ENCODE measurements at regions of chr1 and their contacts with region 1.

Region 1: DNA sequence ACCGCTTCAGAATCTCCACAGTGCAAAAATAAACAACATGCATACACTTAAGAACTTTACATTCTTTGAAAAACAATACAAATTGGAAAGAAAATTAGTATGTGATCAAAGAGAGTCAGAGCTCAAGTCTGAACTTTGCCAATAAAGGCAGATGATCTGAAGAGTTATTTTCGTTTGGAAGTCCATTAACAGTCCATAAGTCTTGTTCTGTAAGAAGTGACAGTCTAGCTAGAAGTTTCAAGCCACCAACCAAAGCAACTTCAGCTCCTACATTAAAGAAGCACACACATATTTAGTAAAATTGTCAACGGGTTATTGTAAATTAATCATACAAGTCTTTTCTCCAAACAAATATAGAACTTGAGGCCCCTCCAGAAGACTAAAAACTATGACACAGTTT is 20.7 kb downstream of the ANGEL2 start:
- DNase-seq: no peak
- H3K4me3 ChIP-seq: no peak overlapping the region
- H3K27ac ChIP-seq: no peak overlapping the region
- H3K4me1 ChIP-seq: peaks cover 3% of the 10 kb centered on the region
- H3K27me3 ChIP-seq: no peaks in the 10 kb centered on the region
- CTCF ChIP-seq: no peak

Region 2: DNA sequence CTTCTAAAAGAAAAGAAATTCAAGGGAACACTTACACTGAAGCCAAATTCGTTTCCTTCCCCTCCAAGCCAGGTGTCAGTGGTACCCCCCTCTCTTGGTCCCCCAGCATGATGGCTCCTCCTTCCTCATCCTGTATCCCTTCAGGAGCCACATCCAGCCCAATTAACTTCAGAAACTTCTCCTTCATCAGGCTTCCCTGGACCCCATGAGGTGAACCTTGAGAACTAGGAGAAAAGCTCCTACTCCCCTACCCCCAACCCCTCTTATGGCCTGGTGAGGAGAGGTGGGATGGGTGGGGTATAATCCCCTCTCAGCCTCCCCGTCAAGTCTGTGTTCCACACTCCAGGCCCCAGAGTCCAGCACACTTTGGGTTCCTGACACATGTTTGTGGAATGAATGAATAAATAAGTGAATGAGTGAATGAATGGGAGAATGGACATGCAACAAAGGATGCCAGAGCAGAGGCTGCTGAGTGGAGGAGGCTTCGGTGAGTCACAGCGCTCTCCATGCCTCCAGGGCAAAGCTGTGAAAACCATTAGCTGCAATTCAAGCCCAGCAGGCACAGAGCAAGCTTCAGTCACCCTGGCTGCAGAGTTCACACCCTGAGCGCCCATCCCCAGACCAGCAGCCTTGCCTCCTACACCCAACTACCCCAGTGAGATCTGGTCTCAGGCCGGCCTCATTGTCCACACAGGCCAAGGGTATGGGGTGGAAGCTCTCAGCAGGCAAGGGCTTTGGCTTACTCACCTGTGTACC is 339.1 kb before region 1 on chr1:
- intact Hi-C with region 1: loop called (anchors 5 kb)
- DNase-seq: no peak
- H3K4me3 ChIP-seq: no peak overlapping the region
- H3K27ac ChIP-seq: no peak overlapping the region
- H3K4me1 ChIP-seq: peaks cover 4% of the 10 kb centered on the region
- H3K27me3 ChIP-seq: no peaks in the 10 kb centered on the region
- CTCF ChIP-seq: no peak

Region 3: GRCh38 chr1:212814537-212815334 is 180.2 kb before region 1 on chr1:
- intact Hi-C with region 1: loop called (anchors 5 kb)
- DNase-seq: no peak
- H3K4me3 ChIP-seq: no peak overlapping the region
- H3K27ac ChIP-seq: no peak overlapping the region
- H3K4me1 ChIP-seq: no peaks in the 10 kb centered on the region
- H3K27me3 ChIP-seq: no peaks in the 10 kb centered on the region
- CTCF ChIP-seq: peak; percentile 53